HEK293 (cell line): ENCODE measurements at regions of chr19 and their contacts with region 1.

Region 1: GRCh38 chr19:55339048-55339888 is at the start of gene KMT5C:
- H3K4me3 ChIP-seq: peak within 1 kb of the TSS; percentile 88
- H3K27ac ChIP-seq: peak within 1 kb of the TSS; percentile 89
- H3K4me1 ChIP-seq: peaks cover 14% of the 10 kb centered on the region
- CTCF ChIP-seq: no peak; the same call in 1 of the 2 replicates

Region 2: DNA sequence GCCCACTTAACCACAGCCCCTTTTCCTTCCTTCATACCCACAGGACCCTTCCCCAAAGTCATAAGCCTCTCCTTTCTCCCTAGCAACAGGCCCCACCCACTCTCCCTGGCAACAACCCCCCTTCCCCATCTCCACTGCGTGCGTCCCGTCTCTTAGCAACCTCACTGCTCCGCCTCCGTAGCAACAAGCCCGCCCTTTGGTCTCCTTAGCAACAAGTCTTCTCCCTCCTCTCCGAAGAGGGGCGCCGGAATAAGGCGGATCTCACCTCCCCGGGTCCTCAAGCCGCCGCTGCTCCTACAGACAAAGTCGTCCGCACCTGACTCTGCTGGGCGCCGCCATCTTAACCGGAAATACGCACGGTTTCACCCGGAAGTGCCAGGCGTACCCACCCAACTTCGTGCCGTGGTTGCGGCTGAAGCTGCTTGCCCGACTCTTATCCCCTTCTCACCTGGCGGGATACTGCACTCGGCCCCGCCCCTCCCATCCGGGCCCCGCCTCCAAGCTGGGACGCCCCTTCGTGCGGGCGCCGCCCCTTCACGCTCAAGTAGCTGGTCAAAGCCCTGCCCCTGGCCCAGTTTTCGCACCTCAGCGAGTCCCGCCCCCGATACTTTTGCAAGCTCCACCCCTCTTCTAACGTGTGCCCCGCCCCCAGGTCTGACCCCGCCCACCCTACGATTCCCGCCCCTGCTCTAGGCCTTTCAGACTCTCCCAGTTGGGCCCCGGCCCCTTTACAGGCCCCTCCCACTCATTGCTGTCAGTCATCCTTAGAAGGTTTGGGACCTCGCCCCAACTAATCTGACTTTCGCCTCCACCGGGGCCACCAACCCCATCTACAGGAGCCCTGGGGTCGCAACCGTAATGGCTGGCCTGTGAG is 59.3 kb before region 1 on chr19 and contains the start of gene HSPBP1:
- CTCF ChIA-PET with region 1: no interaction called
- POLR2A ChIA-PET with region 1: interaction called, 15 read pairs
- H3K4me3 ChIP-seq: peak within 1 kb of the TSS; percentile 97
- H3K27ac ChIP-seq: peak within 1 kb of the TSS; percentile 57
- H3K4me1 ChIP-seq: peaks cover 12% of the 10 kb centered on the region
- CTCF ChIP-seq: no peak

Region 3: DNA sequence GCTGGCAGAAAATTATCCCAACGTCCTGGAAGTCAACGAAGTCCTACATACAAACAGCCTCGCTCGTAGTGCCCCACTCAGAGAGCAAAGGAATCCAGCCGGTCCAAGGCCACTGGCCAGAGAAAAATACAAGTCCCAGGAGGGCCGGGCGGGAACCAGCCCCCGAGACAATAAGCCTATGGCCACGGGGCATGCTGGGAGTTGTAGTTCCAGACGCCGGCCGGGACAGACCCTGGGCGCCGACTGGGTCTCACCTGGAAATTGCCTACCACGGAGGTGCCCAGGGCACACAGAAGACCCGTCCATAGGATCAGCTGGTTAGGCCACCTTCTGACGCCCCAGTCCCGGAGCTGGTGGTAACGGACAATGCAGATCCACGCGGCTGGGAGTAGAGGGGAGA is 19.5 kb before region 1 on chr19:
- CTCF ChIA-PET with region 1: interaction called, 3 read pairs
- POLR2A ChIA-PET with region 1: interaction called, 21 read pairs
- H3K4me3 ChIP-seq: no peak overlapping the region
- H3K27ac ChIP-seq: no peak overlapping the region
- H3K4me1 ChIP-seq: no peaks in the 10 kb centered on the region
- CTCF ChIP-seq: no peak

Region 4: GRCh38 chr19:55385740-55386529 is 46.7 kb after region 1 on chr19 and contains the start of gene RPL28:
- CTCF ChIA-PET with region 1: interaction called, 3 read pairs
- POLR2A ChIA-PET with region 1: interaction called, 18 read pairs
- H3K4me3 ChIP-seq: peak within 1 kb of the TSS; percentile 94
- H3K27ac ChIP-seq: peak within 1 kb of the TSS; percentile 84
- H3K4me1 ChIP-seq: peaks cover 27% of the 10 kb centered on the region
- CTCF ChIP-seq: 0 out of 2 replicates have a peak, but pooled peaks have one; percentile 31

Region 5: DNA sequence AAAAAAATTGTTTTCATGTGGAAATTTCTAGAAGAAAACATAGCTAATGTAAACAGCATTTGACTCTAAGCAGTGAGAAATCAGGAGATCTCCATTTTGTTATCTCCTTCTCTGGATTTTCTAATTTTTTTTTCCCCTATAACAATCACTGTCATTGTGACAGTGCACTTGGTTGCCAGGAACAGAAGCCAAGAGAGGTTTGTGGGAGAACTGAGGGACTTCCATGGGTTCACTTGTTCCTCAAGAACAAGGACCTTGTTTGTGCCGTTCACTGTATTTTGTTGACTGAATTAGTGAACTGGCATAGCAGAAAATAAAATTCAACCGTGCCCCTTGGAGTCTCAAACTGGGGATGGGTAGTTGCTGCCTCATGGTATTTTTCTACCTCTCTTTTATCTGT is 86.8 kb after region 1 on chr19:
- CTCF ChIA-PET with region 1: no interaction called
- POLR2A ChIA-PET with region 1: no interaction called
- H3K4me3 ChIP-seq: no peak overlapping the region
- H3K27ac ChIP-seq: no peak overlapping the region
- H3K4me1 ChIP-seq: no peaks in the 10 kb centered on the region
- CTCF ChIP-seq: no peak

Region 6: GRCh38 chr19:55461259-55461973 is 122.1 kb after region 1 on chr19 and contains the start of gene ISOC2:
- CTCF ChIA-PET with region 1: no interaction called
- POLR2A ChIA-PET with region 1: interaction called, 10 read pairs
- H3K4me3 ChIP-seq: peak within 1 kb of the TSS; percentile 85
- H3K27ac ChIP-seq: peak within 1 kb of the TSS; percentile 56; the same call in 1 of the 2 replicates
- H3K4me1 ChIP-seq: peaks cover 12% of the 10 kb centered on the region
- CTCF ChIP-seq: no peak